ENCODE measurements at regions of chr1 and their contacts with region 1.

Region 1: GRCh38 chr1:10867138-10867721 is 70.8 kb upstream of the CASZ1 start:
- DNase-seq: peak; percentile 22
- H3K4me3 ChIP-seq: peak overlapping the region in 1 of 3 experiments; percentile 22
- H3K27ac ChIP-seq: no peak overlapping the region
- H3K4me1 ChIP-seq: no peaks in the 10 kb centered on the region
- H3K27me3 ChIP-seq: peaks cover 9 to 11% of the 10 kb centered on the region in 2 experiments
- CTCF ChIP-seq: peak; percentile 48 to 77
- POLR2A ChIP-seq: no peak

Region 2: GRCh38 chr1:10378081-10378841 is 489.0 kb before region 1 on chr1:
- CTCF ChIA-PET with region 1: no interaction called
- POLR2A ChIA-PET with region 1: no interaction called
- dilution Hi-C with region 1: no loop called
- intact Hi-C with region 1: loop called (anchors 5 kb)
- DNase-seq: peak; percentile 44
- H3K4me3 ChIP-seq: no peak overlapping the region
- H3K27ac ChIP-seq: peak overlapping the region; percentile 51
- H3K4me1 ChIP-seq: peaks cover 3% of the 10 kb centered on the region
- H3K27me3 ChIP-seq: no peaks in the 10 kb centered on the region
- CTCF ChIP-seq: no peak
- POLR2A ChIP-seq: no peak

Region 3: DNA sequence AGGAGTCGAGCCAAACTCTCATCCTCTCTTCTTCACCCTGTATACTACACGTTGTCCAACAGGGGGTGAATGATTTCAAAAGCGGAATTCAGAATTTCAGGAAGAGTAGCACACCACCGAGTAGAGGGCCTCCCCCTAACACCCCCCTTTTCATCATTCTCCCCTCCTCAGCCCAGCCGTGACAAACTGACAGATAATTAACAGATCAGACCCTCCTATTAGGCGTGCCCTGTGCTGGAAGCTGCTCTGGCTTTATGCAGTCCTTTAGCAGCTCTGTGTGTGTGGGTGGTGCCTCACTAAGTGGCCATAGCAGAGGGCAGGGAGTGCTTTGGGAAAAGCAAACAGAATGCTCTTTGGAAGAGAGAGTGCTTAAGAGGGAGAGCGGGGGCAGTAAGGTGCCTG is 348.2 kb before region 1 on chr1:
- CTCF ChIA-PET with region 1: interaction called, 12 read pairs
- POLR2A ChIA-PET with region 1: no interaction called
- dilution Hi-C with region 1: no loop called
- intact Hi-C with region 1: no loop called
- DNase-seq: no peak
- H3K4me3 ChIP-seq: no peak overlapping the region
- H3K27ac ChIP-seq: no peak overlapping the region
- H3K4me1 ChIP-seq: peaks cover 3% of the 10 kb centered on the region
- H3K27me3 ChIP-seq: no peaks in the 10 kb centered on the region
- CTCF ChIP-seq: no peak
- POLR2A ChIP-seq: no peak

Region 4: GRCh38 chr1:10635085-10635896 is 231.9 kb before region 1 on chr1:
- CTCF ChIA-PET with region 1: no interaction called
- POLR2A ChIA-PET with region 1: no interaction called
- dilution Hi-C with region 1: no loop called
- intact Hi-C with region 1: loop called (anchors 10 kb)
- DNase-seq: no peak
- H3K4me3 ChIP-seq: no peak overlapping the region
- H3K27ac ChIP-seq: no peak overlapping the region
- H3K4me1 ChIP-seq: peaks cover 7% of the 10 kb centered on the region
- H3K27me3 ChIP-seq: peaks cover 0 to 9% of the 10 kb centered on the region in 2 experiments
- CTCF ChIP-seq: no peak
- POLR2A ChIP-seq: no peak

Region 5: GRCh38 chr1:10788592-10789006 is 78.6 kb before region 1 on chr1:
- CTCF ChIA-PET with region 1: no interaction called
- POLR2A ChIA-PET with region 1: no interaction called
- dilution Hi-C with region 1: no loop called
- intact Hi-C with region 1: loop called (anchors 2 kb)
- DNase-seq: peak; percentile 30
- H3K4me3 ChIP-seq: no peak overlapping the region
- H3K27ac ChIP-seq: no peak overlapping the region
- H3K4me1 ChIP-seq: peaks cover 3% of the 10 kb centered on the region
- H3K27me3 ChIP-seq: peaks cover 20 to 26% of the 10 kb centered on the region in 2 experiments
- CTCF ChIP-seq: peak in 1 of 2 donors; percentile 57
- POLR2A ChIP-seq: no peak

Region 6: GRCh38 chr1:10901086-10901890 is 34.1 kb after region 1 on chr1:
- CTCF ChIA-PET with region 1: no interaction called
- POLR2A ChIA-PET with region 1: no interaction called
- dilution Hi-C with region 1: no loop called
- intact Hi-C with region 1: no loop called
- DNase-seq: no peak
- H3K4me3 ChIP-seq: no peak overlapping the region
- H3K27ac ChIP-seq: no peak overlapping the region
- H3K4me1 ChIP-seq: no peaks in the 10 kb centered on the region
- H3K27me3 ChIP-seq: no peaks in the 10 kb centered on the region
- CTCF ChIP-seq: no peak
- POLR2A ChIP-seq: no peak

Measured in endothelial cell of umbilical vein (primary cell).